PC-9 (cell line): ENCODE measurements at regions of chr3 and their contacts with region 1.

Region 1: DNA sequence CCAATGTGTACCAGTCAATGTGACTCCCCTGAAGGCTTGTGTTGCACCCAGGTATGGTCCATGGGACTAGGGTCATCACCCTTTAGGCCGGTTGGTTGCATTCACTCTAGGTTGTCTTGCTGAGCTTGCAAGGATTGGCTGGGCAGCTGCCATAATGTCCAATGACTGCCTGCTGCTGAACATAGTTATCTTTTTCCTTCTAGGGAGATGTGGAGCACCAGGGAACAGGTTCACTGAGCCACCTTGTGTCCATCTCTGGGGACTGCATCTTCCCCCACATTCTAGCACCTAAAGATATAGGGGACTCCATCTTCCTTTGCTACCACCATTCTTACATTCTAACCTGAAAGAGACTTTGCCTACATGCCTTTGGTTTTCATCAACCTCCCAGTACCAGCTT is 580.4 kb upstream of the TBL1XR1 start:
- DNase-seq: peak; percentile 28 to 44
- H3K4me3 ChIP-seq: no peak overlapping the region
- H3K27ac ChIP-seq: no peak overlapping the region
- H3K4me1 ChIP-seq: peaks cover 24% of the 10 kb centered on the region
- H3K27me3 ChIP-seq: no peaks in the 10 kb centered on the region
- CTCF ChIP-seq: peak; percentile 56

Region 2: DNA sequence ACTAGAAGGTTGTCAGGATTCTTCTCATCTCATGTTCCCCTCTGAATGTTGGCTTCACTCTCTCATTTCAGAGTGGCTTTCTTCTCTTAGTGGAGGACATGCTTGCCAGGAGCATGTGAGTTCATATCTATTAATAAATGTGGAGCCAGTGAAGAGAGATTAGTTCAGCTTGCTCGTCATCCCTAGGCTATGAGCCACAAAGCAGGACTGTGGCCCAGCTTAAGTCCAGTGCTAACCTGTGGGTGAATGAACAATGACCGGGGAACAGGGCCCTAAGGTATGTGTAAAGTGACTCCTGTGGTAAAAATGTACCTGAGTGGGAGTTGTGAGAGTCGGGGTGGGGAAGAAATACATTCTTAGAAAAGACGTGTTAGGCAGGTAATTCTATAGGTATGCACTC is 483.5 kb before region 1 on chr3:
- CTCF ChIA-PET with region 1: no interaction called
- POLR2A ChIA-PET with region 1: no interaction called
- intact Hi-C with region 1: loop called (anchors 2 kb)
- DNase-seq: peak; percentile 69 to 71
- H3K4me3 ChIP-seq: no peak overlapping the region
- H3K27ac ChIP-seq: peak overlapping the region; percentile 57; the same call in 1 of the 2 replicates
- H3K4me1 ChIP-seq: peaks cover 23% of the 10 kb centered on the region
- H3K27me3 ChIP-seq: no peaks in the 10 kb centered on the region
- CTCF ChIP-seq: no peak

Region 3: GRCh38 chr3:177525987-177526712 is 251.5 kb before region 1 on chr3:
- CTCF ChIA-PET with region 1: no interaction called
- POLR2A ChIA-PET with region 1: no interaction called
- intact Hi-C with region 1: loop called (anchors 1 kb)
- DNase-seq: peak; percentile 25 to 87
- H3K4me3 ChIP-seq: no peak overlapping the region
- H3K27ac ChIP-seq: no peak overlapping the region
- H3K4me1 ChIP-seq: peaks cover 79% of the 10 kb centered on the region
- H3K27me3 ChIP-seq: no peaks in the 10 kb centered on the region
- CTCF ChIP-seq: no peak

Region 4: GRCh38 chr3:177665122-177665808 is 112.4 kb before region 1 on chr3:
- CTCF ChIA-PET with region 1: no interaction called
- POLR2A ChIA-PET with region 1: no interaction called
- intact Hi-C with region 1: loop called (anchors 2 kb)
- DNase-seq: no peak
- H3K4me3 ChIP-seq: no peak overlapping the region
- H3K27ac ChIP-seq: no peak overlapping the region
- H3K4me1 ChIP-seq: no peaks in the 10 kb centered on the region
- H3K27me3 ChIP-seq: no peaks in the 10 kb centered on the region
- CTCF ChIP-seq: no peak

Region 5: DNA sequence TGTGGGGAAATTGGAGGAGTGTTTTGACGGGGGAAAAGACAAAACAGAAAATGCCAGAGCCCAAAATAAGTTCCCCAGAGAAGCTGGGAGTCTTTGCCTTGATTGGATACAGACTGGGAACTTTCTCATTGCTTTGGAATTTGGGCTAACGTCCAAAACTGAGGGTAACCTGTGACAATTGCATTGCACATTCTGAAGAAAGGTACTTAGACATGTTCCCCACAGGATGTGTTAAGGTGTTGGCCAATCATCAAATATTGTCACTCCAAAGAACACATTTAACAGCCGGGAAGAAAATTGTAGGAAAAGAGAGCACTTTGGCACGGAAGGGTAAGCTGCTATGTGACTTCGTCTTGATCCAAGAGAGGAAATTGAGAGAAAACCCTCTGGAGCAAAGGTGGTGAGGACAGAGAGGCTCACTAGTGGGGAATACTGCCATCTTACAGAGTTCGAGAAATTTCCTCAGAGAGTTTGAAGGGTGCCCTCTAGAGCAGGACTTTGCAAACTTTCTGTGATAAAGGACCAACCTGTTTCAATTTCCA is 39.0 kb after region 1 on chr3:
- CTCF ChIA-PET with region 1: no interaction called
- POLR2A ChIA-PET with region 1: no interaction called
- intact Hi-C with region 1: loop called (anchors 2 kb)
- DNase-seq: peak; percentile 75 to 97
- H3K4me3 ChIP-seq: 0 out of 2 replicates have a peak overlapping the region, but pooled peaks have one; percentile 1
- H3K27ac ChIP-seq: peak overlapping the region; percentile 76
- H3K4me1 ChIP-seq: peaks cover 40% of the 10 kb centered on the region
- H3K27me3 ChIP-seq: no peaks in the 10 kb centered on the region
- CTCF ChIP-seq: peak; percentile 46; the same call in 1 of the 2 replicates

Region 6: GRCh38 chr3:178385280-178385952 is 607.7 kb after region 1 on chr3:
- CTCF ChIA-PET with region 1: interaction called, 5 read pairs
- POLR2A ChIA-PET with region 1: no interaction called
- intact Hi-C with region 1: loop called (anchors 2 kb)
- DNase-seq: peak in 1 of 2 experiments; percentile 31
- H3K4me3 ChIP-seq: no peak overlapping the region
- H3K27ac ChIP-seq: no peak overlapping the region
- H3K4me1 ChIP-seq: peaks cover 26% of the 10 kb centered on the region
- H3K27me3 ChIP-seq: no peaks in the 10 kb centered on the region
- CTCF ChIP-seq: peak; percentile 98